PC-3 (cell line): ENCODE measurements at regions of chr10 and their contacts with region 1.

Region 1: DNA sequence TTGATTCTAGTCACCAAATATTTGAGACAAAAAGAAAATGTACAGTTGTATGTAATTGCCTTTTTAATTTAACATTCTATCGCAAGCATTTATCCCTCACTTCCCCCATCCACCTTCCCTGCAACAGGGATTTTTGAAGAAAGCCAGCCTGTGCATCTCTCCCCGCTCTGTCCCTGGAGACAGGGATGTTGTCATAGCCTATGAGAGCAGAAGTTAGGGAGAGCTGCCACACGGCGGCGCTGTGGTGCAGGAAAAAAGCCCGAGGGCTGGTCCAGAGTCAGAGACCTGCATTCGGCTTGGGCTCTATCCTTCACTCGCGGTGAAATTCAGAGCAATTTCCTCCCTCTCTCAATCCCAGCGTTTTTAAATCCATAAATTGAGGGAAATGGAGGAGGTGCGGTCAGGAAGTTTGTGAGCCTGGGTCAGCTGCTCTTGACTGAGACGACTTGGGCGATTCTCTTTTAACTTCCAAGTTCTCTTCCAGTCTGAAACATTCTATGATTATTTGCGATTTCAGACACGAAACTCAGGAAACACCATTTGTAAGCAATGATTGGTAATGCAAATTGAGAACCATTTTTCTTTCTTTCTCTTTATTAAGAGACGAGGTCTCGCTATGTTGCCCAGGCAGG is 17.5 kb downstream of the HKDC1 start:
- DNase-seq: peak; percentile 98
- ATAC-seq: peak; percentile 94
- H3K4me3 ChIP-seq: no peak overlapping the region
- H3K27ac ChIP-seq: no peak overlapping the region
- H3K4me1 ChIP-seq: peaks cover 31% of the 10 kb centered on the region
- H3K27me3 ChIP-seq: no peaks in the 10 kb centered on the region
- CTCF ChIP-seq: peak; percentile 99

Region 2: DNA sequence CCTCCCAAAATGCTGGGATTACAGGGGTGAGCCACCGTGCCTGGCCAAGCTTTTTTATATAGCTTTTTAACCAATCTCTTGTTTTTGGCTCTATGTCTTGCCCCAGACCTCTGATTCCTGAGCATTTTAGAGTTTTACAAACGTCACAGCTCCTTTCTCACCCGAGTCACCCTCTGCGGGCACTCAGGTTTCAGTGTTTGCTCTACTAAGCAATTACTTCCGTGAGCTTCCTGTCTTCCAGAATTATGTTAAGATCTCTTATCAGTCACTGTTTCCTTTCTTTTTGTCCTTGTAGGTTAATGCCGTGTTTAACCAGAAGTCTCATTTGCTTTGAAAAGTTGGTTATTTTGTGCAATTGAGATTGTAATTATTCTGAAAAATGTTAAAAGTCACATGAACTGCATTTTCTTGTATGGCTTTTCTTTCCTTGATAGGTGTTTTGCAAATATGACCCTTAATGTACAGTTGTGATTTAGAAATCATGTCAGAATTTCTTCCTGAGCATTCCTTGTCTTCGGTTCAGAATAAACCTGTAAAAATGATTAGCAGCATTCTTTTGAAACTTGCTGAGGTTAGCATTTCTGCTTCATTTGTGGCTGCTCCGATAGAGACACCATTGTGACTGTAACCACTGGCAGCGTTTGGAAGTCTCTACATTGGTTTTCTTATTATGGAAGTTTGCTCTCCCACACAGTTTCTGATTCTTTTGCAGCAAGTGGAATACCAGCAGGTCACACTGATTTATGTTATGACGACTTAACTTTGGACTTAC is 22.1 kb before region 1 on chr10:
- CTCF ChIA-PET with region 1: interaction called, 5 read pairs
- POLR2A ChIA-PET with region 1: interaction called, 14 read pairs
- intact Hi-C with region 1: no loop called
- DNase-seq: no peak
- ATAC-seq: peak; percentile 12; the same call in 1 of the 2 replicates
- H3K4me3 ChIP-seq: no peak overlapping the region
- H3K27ac ChIP-seq: no peak overlapping the region
- H3K4me1 ChIP-seq: peaks cover 12% of the 10 kb centered on the region; the same call in 1 of the 2 replicates
- H3K27me3 ChIP-seq: no peaks in the 10 kb centered on the region
- CTCF ChIP-seq: no peak

Region 3: DNA sequence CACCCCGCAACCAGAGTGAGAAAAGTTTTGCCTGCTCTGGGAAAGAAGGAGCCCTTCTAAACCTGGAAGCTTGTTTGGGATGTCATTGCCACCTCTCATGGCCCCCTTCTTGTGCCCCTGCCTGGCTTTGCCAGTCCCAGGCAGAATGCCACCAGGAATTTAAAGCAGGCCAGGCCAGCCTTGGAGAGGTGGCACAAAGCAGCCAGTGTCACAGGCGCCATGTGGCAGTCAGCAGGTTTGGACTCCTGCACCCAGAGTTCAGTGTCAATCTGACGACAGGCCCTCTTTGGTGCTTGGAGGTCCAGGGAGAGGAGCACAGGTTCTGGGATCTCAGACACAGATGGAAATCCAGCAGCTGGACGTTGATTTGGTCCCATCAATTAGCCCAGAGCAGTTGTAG is 53.3 kb after region 1 on chr10:
- CTCF ChIA-PET with region 1: no interaction called
- POLR2A ChIA-PET with region 1: no interaction called
- intact Hi-C with region 1: no loop called
- DNase-seq: no peak
- ATAC-seq: no peak
- H3K4me3 ChIP-seq: no peak overlapping the region
- H3K27ac ChIP-seq: no peak overlapping the region
- H3K4me1 ChIP-seq: no peaks in the 10 kb centered on the region
- H3K27me3 ChIP-seq: no peaks in the 10 kb centered on the region
- CTCF ChIP-seq: no peak